ENCODE measurements at regions of chr7 and their contacts with region 1.

Region 1: GRCh38 chr7:33932832-33933468 is 27.6 kb downstream of the BMPER start:
- DNase-seq: peak; percentile 52
- H3K4me3 ChIP-seq: peak overlapping the region; percentile 10; the same call in 1 of the 2 replicates
- CTCF ChIP-seq: peak; percentile 93

Region 2: GRCh38 chr7:33185786-33186185 is 747.2 kb before region 1 on chr7:
- CTCF ChIA-PET with region 1: interaction called, 17 read pairs
- POLR2A ChIA-PET with region 1: no interaction called
- DNase-seq: no peak
- H3K4me3 ChIP-seq: no peak overlapping the region
- CTCF ChIP-seq: peak; percentile 54

Region 3: GRCh38 chr7:33422825-33423645 is 509.9 kb before region 1 on chr7:
- CTCF ChIA-PET with region 1: interaction called, 13 read pairs
- POLR2A ChIA-PET with region 1: no interaction called
- DNase-seq: no peak
- H3K4me3 ChIP-seq: no peak overlapping the region
- CTCF ChIP-seq: no peak

Region 4: DNA sequence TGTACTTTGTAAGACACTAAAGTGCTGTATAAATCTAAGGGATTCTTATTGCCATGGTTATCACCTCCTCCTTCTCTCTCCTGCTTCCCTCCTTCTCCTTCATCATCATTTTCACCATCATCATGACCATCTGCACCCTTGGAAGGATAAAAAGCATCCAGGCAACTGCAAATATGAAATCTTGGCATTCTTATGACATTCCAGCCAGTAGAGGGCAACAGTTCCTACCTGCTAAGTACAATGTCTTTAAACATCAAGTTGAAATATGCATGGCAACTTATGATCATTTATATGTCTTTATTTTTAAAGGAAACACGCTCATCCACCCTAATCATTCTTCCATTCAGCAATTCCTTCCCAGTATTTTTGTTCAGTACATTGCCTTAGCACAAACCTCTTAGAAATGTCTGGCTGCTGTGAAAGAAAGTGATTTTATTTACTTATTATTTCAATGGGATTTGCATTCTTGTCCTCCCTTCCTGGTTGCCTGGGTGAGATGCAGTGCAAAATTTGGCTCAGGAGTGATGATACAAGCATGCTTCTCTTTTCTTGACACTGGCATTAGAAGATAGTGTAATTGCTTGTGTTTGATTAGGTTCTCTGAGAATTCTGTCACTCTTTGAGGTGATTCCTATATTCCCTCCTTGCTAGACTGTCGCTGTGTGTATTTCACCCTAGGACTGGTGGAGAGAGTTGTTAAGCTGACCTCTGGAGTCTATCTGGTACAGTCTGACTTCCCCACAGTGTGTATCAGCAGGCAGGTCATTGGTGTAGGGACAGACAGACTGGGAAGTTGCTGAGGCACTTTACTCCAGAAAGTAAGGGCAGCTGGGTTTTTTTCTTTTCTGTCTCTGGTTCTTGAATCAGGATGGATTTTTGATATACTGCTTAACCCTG is 216.1 kb before region 1 on chr7:
- CTCF ChIA-PET with region 1: interaction called, 20 read pairs
- POLR2A ChIA-PET with region 1: no interaction called
- DNase-seq: no peak
- H3K4me3 ChIP-seq: no peak overlapping the region
- CTCF ChIP-seq: peak; percentile 48

Region 5: DNA sequence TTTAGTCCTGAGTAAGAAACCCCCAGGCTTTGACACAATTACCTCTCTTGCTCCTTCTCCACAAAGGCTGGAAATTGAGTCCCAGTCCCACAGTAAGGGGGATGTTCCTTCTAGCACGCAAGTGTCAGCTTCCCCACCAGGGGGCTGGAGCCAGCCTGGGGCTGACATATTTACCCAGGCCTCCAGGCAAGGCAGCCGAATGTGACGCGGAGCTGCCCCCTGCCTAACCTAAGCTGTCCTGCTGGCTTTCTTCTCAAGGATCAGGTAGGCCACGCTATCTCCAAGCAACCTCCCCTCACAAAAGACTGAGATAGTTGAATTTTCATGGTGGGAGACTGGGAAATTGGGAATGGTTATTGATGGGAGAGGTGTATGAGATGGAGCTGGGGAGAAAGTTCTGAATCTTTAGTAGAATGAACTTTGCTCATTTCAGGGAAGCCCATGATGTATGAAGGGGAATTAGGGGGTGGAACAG is 46.8 kb before region 1 on chr7:
- CTCF ChIA-PET with region 1: interaction called, 15 read pairs
- POLR2A ChIA-PET with region 1: no interaction called
- DNase-seq: no peak
- H3K4me3 ChIP-seq: no peak overlapping the region
- CTCF ChIP-seq: peak; percentile 65

Region 6: GRCh38 chr7:33921216-33921938 is 11.6 kb before region 1 on chr7:
- CTCF ChIA-PET with region 1: interaction called, 74 read pairs
- POLR2A ChIA-PET with region 1: no interaction called
- DNase-seq: no peak
- H3K4me3 ChIP-seq: no peak overlapping the region
- CTCF ChIP-seq: no peak

Region 7: GRCh38 chr7:33986941-33987588 is 54.1 kb after region 1 on chr7:
- CTCF ChIA-PET with region 1: interaction called, 38 read pairs
- POLR2A ChIA-PET with region 1: no interaction called
- DNase-seq: peak; percentile 96
- H3K4me3 ChIP-seq: no peak overlapping the region
- CTCF ChIP-seq: no peak

Region 8: GRCh38 chr7:34121396-34121982 is 188.5 kb after region 1 on chr7:
- CTCF ChIA-PET with region 1: no interaction called
- POLR2A ChIA-PET with region 1: no interaction called
- DNase-seq: no peak
- H3K4me3 ChIP-seq: no peak overlapping the region
- CTCF ChIP-seq: no peak

Measured in AG04449 (cell line).